Pancreas (tissue), 10 donors: ENCODE measurements at regions of chr11 and their contacts with region 1.

Region 1: DNA sequence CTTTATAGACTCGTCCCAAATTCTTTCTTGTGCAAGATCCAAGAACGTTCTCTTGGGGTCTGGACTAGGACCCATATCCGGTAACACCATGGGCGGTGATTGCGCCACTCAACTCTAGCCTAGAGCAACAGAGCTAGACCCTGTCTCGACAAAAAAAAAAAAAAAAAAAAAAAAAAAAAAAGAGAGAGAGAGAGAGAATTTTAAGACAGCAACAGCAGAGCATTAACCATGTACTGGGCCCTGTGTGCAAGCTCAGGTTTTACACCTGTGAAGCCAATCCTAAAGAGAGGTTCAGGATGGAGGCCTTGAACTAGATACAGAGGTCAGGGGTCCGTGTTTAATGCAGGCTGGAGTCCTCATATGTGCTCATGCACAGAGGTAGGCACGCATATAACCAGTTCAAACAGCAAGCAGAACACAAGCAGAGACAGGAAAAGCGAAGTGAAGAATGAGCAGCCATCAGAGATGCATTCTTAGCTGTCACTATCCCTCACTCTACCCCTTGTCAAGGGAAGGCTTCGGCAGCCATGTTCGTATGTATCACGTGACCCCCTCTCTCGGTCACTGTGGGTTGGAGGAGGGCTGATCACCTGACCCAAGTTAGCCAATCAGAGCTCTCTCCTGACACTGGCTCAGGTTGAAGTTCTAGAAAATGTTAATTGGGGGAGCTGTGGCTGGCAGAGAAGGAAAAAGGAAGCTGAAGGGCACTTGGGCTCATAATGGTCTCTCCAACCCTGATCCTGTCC is 16.6 kb upstream of the SYT12 start:
- DNase-seq: no peak
- ATAC-seq: peak in 1 of 4 donors; percentile 50
- H3K4me3 ChIP-seq: no peak overlapping the region
- H3K27ac ChIP-seq: no peak overlapping the region
- H3K4me1 ChIP-seq: no peaks in the 10 kb centered on the region
- H3K27me3 ChIP-seq: no peaks in the 10 kb centered on the region
- CTCF ChIP-seq: no peak

Region 2: DNA sequence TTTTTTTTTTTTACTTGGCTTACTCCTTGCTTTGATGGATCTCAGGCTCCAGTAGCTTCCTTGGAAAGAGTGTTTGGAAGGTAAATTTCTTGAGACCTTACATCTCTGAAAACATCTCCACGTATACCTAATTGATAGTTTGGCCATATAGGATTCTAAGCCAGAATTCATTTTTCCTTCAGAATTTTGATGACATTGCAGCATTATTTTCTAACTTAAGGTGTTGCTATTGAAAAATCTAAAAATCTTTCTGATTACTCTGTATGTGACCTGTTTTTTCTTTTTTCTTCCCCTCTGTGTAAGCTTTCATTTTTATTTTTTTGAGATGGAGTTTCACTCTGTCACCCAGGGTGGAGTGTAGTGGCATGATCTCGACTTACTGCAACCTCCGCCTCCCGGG is 254.2 kb before region 1 on chr11:
- intact Hi-C with region 1: loop called in 1 of 3 experiments (anchors 10 kb)
- DNase-seq: no peak
- ATAC-seq: no peak
- H3K4me3 ChIP-seq: no peak overlapping the region
- H3K27ac ChIP-seq: no peak overlapping the region
- H3K4me1 ChIP-seq: no peaks in the 10 kb centered on the region
- H3K27me3 ChIP-seq: no peaks in the 10 kb centered on the region
- CTCF ChIP-seq: no peak